ENCODE measurements at regions of chr20 and their contacts with region 1.

Region 1: GRCh38 chr20:35994994-35995453 is 26.6 kb downstream of the CNBD2 start:
- DNase-seq: peak; percentile 69 to 89
- H3K4me3 ChIP-seq: no peak overlapping the region
- H3K27ac ChIP-seq: no peak overlapping the region
- H3K4me1 ChIP-seq: no peaks in the 10 kb centered on the region
- H3K27me3 ChIP-seq: no peaks in the 10 kb centered on the region
- CTCF ChIP-seq: peak; percentile 88

Region 2: DNA sequence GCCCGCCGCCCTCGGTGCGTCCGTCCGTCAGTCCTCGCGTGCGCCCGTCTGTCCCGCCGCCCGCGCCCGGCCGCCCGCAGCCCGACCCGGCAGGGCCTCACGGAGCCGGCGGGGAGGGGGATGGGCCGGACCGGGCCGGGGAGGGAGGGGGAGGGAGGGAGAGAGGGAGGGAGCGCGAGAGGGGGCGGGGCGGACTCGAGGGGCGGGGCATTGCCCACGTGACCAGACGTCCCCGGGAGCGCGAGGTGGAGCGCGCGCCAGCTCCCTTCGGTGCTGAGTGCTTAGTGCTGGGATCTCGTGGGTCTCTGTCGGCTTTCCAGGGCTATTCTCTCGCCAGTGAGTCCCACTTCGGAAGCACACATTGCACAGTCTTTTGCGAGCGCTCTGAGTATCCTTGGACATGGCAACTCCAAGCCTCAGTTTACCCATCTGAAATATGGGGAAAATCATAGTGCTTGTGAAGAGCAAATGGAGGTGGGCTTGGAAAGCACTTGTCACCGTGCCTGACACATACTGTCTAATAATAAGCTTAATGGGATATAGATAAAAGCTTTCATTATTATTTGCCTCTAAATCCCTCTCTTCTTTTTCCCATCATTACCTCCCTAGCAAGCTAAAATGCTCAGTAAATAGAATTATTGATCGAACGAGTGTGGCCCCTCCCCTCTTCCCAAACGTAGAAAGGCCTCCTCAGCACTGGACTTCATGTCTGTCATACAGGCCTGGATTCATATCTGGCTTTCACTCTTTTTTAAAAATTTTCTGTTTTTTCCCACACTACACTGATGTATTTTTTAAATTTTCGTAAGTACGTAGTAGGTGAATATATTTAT is 1169.3 kb before region 1 on chr20 and contains the start of gene NCOA6:
- CTCF ChIA-PET with region 1: no interaction called
- POLR2A ChIA-PET with region 1: no interaction called
- intact Hi-C with region 1: no loop called
- DNase-seq: peak in 1 of 2 experiments; percentile 81
- H3K4me3 ChIP-seq: peak within 1 kb of the TSS; percentile 98
- H3K27ac ChIP-seq: peak within 1 kb of the TSS; percentile 54
- H3K4me1 ChIP-seq: peaks cover 24% of the 10 kb centered on the region
- H3K27me3 ChIP-seq: no peaks in the 10 kb centered on the region
- CTCF ChIP-seq: no peak
- total RNA-seq, gene NCOA6: 26.7 and 35.1 TPM in 2 replicates

Region 3: GRCh38 chr20:35954200-35954906 is 40.7 kb before region 1 on chr20 and contains the start of gene SCAND1:
- CTCF ChIA-PET with region 1: interaction called, 9 read pairs
- POLR2A ChIA-PET with region 1: interaction called, 17 read pairs
- intact Hi-C with region 1: loop called (anchors 2 kb)
- DNase-seq: peak; percentile 96 to 99
- H3K4me3 ChIP-seq: peak within 1 kb of the TSS; percentile 99
- H3K27ac ChIP-seq: peak within 1 kb of the TSS; percentile 98
- H3K4me1 ChIP-seq: peaks cover 28% of the 10 kb centered on the region
- H3K27me3 ChIP-seq: no peaks in the 10 kb centered on the region
- CTCF ChIP-seq: peak; percentile 85
- total RNA-seq, gene SCAND1: 56.6 and 95.0 TPM in 2 replicates

Region 4: GRCh38 chr20:35972462-35972861 is 22.6 kb before region 1 on chr20:
- CTCF ChIA-PET with region 1: no interaction called
- POLR2A ChIA-PET with region 1: no interaction called
- intact Hi-C with region 1: no loop called
- DNase-seq: no peak
- H3K4me3 ChIP-seq: no peak overlapping the region
- H3K27ac ChIP-seq: no peak overlapping the region
- H3K4me1 ChIP-seq: peaks cover 15% of the 10 kb centered on the region
- H3K27me3 ChIP-seq: no peaks in the 10 kb centered on the region
- CTCF ChIP-seq: no peak

Region 5: DNA sequence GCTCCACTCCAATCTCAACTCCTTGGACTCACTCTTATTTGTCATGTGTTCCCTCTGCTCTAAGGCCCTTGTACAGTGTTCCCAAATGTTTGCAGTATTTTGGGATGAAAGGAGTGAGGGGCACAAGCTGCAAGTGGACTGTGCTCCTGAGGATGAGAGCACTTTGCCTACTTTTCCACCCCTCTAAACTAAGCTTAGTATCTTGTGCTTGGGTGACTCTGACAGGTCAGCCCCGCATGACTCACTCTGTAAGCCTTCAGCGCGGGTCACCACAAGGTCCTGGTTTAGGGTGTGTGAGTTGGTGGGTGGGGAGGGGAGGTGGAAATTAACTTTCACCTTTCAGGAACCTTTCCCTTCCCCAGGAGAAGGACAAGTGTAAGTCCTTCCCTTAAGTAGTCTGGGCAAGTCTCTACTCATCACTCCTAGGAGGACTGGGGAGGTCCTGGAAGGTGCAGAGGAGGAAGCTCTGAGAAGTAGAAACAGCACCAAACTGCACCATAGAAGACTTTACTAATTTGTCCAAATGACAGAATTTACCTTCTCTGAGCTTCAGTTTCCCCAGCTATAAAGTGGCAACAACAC is 90.8 kb after region 1 on chr20:
- CTCF ChIA-PET with region 1: interaction called, 11 read pairs
- POLR2A ChIA-PET with region 1: interaction called, 13 read pairs
- intact Hi-C with region 1: no loop called
- DNase-seq: peak; percentile 91 to 96
- H3K4me3 ChIP-seq: peak overlapping the region; percentile 43; the same call in 1 of the 2 replicates
- H3K27ac ChIP-seq: peak overlapping the region; percentile 97
- H3K4me1 ChIP-seq: peaks cover 73% of the 10 kb centered on the region
- H3K27me3 ChIP-seq: no peaks in the 10 kb centered on the region
- CTCF ChIP-seq: no peak

Region 6: GRCh38 chr20:36098364-36098763 is 103.3 kb after region 1 on chr20:
- CTCF ChIA-PET with region 1: interaction called, 3 read pairs
- POLR2A ChIA-PET with region 1: interaction called, 5 read pairs
- intact Hi-C with region 1: loop called (anchors 1 kb)
- DNase-seq: peak in 1 of 2 experiments; percentile 47
- H3K4me3 ChIP-seq: no peak overlapping the region
- H3K27ac ChIP-seq: peak overlapping the region; percentile 42
- H3K4me1 ChIP-seq: peaks cover 59% of the 10 kb centered on the region
- H3K27me3 ChIP-seq: no peaks in the 10 kb centered on the region
- CTCF ChIP-seq: no peak